Activated CD8-positive, alpha-beta T cell treated with anti-CD3 and anti-CD28 coated beads for 36 hours (primary cell): ENCODE measurements at regions of chr5 and their contacts with region 1.

Region 1: GRCh38 chr5:172106511-172107356 is 81.3 kb downstream of the STK10 start:
- DNase-seq: peak; percentile 74
- ATAC-seq: no peak
- H3K4me3 Mint-ChIP-seq: no peak overlapping the region
- H3K27ac Mint-ChIP-seq: peak overlapping the region; percentile 84
- H3K4me1 Mint-ChIP-seq: peaks cover 60% of the 10 kb centered on the region
- H3K27me3 Mint-ChIP-seq: no peaks in the 10 kb centered on the region
- CTCF ChIP-seq: peak; percentile 98

Region 2: GRCh38 chr5:171966270-171966669 is 140.5 kb before region 1 on chr5:
- CTCF ChIA-PET with region 1: no interaction called
- POLR2A ChIA-PET with region 1: no interaction called
- intact Hi-C with region 1: no loop called
- DNase-seq: no peak
- ATAC-seq: peak; percentile 40
- H3K4me3 Mint-ChIP-seq: no peak overlapping the region
- H3K27ac Mint-ChIP-seq: peak overlapping the region; percentile 90
- H3K4me1 Mint-ChIP-seq: peaks cover 74% of the 10 kb centered on the region
- H3K27me3 Mint-ChIP-seq: no peaks in the 10 kb centered on the region
- CTCF ChIP-seq: no peak

Region 3: DNA sequence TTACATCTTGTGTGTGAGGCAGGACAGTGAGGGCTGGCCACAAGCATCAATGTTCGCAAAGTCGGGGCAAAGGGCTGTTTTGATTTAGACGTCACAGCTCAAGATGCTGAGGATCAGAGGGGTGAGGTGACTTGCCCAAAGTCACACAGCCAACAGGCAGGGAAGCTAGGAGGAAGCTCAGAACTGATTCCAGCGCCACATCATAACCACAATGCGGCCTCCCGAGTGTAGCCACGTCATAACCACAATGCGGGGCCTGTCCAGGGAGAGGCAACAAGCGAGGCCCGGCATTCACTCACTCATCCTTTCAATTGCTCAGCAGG is 67.1 kb after region 1 on chr5:
- CTCF ChIA-PET with region 1: interaction called, 16 read pairs
- POLR2A ChIA-PET with region 1: interaction called, 36 read pairs
- intact Hi-C with region 1: no loop called
- DNase-seq: peak; percentile 87
- ATAC-seq: peak; percentile 15
- H3K4me3 Mint-ChIP-seq: peak overlapping the region; percentile 83
- H3K27ac Mint-ChIP-seq: peak overlapping the region; percentile 94
- H3K4me1 Mint-ChIP-seq: peaks cover 82% of the 10 kb centered on the region
- H3K27me3 Mint-ChIP-seq: no peaks in the 10 kb centered on the region
- CTCF ChIP-seq: no peak

Region 4: GRCh38 chr5:172283020-172283861 is 176.5 kb after region 1 on chr5 and contains the start of gene UBTD2:
- CTCF ChIA-PET with region 1: interaction called, 8 read pairs
- POLR2A ChIA-PET with region 1: no interaction called
- intact Hi-C with region 1: loop called (anchors 5 kb)
- DNase-seq: peak; percentile 82
- ATAC-seq: peak; percentile 82
- H3K4me3 Mint-ChIP-seq: peak within 1 kb of the TSS; percentile 84
- H3K27ac Mint-ChIP-seq: peak within 1 kb of the TSS; percentile 81
- H3K4me1 Mint-ChIP-seq: peaks cover 21% of the 10 kb centered on the region
- H3K27me3 Mint-ChIP-seq: no peaks in the 10 kb centered on the region
- CTCF ChIP-seq: peak; percentile 76
- total RNA-seq, gene UBTD2: 7.9 to 8.3 TPM